H1 (cell line): ENCODE measurements at regions of chr2 and their contacts with region 1.

Region 1: DNA sequence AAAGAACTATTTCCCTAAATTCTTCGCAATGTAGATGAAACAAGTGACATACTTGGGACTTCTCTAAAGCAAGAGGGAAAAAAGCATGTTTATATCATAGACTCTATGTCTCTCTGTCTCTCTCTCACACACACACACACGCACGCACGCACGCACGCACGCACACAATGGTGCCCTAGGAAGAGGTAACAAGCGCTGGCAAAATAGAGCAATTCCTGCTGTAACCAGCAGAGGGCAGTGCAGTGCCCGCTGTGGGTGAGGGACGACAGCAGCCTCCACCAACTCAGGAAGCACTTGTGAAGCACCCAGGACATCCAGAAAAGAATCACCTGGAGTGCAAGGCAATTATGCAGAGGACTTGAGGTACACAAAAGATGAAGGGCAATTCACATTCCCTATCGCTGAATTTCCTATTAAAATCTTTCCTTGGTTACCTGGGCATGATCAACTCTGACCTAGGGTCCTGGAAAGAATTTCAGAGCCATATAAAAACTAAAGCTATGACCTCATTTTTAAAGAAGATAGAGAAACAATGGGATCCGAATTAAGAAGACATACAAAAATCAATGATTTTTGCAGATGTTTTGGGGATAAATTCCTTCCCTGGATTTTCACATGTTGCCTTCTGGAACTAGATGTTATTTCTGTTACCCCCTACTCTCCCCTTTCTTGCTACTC is 166.4 kb downstream of the PDE11A start:
- DNase-seq: peak; percentile 39 to 95
- H3K4me3 ChIP-seq: no peak overlapping the region
- H3K27ac ChIP-seq: no peak overlapping the region
- H3K4me1 ChIP-seq: no peaks in the 10 kb centered on the region
- H3K27me3 ChIP-seq: no peaks in the 10 kb centered on the region; a peak in 1 of 7 replicates
- CTCF ChIP-seq: peak; percentile 88 to 97 (median 94)
- EP300 ChIP-seq: no peak
- POLR2A ChIP-seq: no peak
- RAD21 ChIP-seq: peak; percentile 75 to 80

Region 2: DNA sequence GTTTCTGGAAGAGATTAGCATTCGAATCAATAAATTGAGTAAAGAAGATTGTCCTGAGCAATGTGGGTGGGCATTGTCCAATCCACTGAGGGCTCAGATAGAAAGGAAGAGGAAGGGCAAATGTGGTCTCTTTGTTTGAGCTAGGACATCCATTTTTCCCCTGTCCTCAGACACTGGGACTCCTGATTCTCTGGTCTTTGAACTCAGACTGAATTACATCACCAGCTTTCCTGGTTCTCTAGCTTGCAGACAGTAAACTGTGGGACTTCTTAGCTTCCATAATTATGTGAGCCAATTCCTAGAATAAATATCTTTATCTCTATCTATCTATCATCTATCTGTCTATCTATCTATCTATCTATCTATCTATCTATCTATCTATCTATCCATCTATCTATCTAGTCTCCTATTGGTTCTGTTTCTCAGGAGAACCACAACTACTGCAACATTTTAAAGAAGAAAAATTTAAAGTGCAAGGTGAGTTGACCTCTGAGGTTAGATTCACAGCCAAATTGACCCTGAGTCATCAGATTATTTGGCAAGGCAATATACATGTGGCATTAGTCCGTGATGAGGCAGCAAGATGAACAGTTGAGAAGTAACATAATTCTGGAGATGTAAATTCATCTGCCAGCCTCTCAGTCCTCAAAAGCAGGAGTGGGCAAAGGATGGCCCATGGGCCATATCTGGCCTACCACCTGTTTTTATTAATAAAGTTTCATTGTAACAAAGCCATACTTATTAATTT is 25.0 kb before region 1 on chr2:
- CTCF ChIA-PET with region 1: no interaction called
- POLR2A ChIA-PET with region 1: no interaction called
- DNase-seq: no peak
- H3K4me3 ChIP-seq: no peak overlapping the region
- H3K27ac ChIP-seq: no peak overlapping the region
- H3K4me1 ChIP-seq: no peaks in the 10 kb centered on the region
- H3K27me3 ChIP-seq: no peaks in the 10 kb centered on the region; a peak in 1 of 7 replicates
- CTCF ChIP-seq: no peak
- EP300 ChIP-seq: no peak
- POLR2A ChIP-seq: no peak
- RAD21 ChIP-seq: no peak

Region 3: GRCh38 chr2:177917169-177917568 is 11.0 kb after region 1 on chr2:
- CTCF ChIA-PET with region 1: interaction called, 18 read pairs
- POLR2A ChIA-PET with region 1: interaction called, 3 read pairs
- DNase-seq: no peak
- H3K4me3 ChIP-seq: no peak overlapping the region
- H3K27ac ChIP-seq: no peak overlapping the region
- H3K4me1 ChIP-seq: no peaks in the 10 kb centered on the region
- H3K27me3 ChIP-seq: no peaks in the 10 kb centered on the region
- CTCF ChIP-seq: no peak
- EP300 ChIP-seq: no peak
- POLR2A ChIP-seq: no peak
- RAD21 ChIP-seq: no peak

Region 4: GRCh38 chr2:177942731-177943130 is 36.6 kb after region 1 on chr2:
- CTCF ChIA-PET with region 1: no interaction called
- POLR2A ChIA-PET with region 1: no interaction called
- DNase-seq: no peak
- H3K4me3 ChIP-seq: no peak overlapping the region
- H3K27ac ChIP-seq: no peak overlapping the region
- H3K4me1 ChIP-seq: no peaks in the 10 kb centered on the region
- H3K27me3 ChIP-seq: no peaks in the 10 kb centered on the region
- CTCF ChIP-seq: no peak
- EP300 ChIP-seq: no peak
- POLR2A ChIP-seq: no peak
- RAD21 ChIP-seq: no peak